Vagina (tissue), 2 donors: ENCODE measurements at regions of chr9 and their contacts with region 1.

Region 1: DNA sequence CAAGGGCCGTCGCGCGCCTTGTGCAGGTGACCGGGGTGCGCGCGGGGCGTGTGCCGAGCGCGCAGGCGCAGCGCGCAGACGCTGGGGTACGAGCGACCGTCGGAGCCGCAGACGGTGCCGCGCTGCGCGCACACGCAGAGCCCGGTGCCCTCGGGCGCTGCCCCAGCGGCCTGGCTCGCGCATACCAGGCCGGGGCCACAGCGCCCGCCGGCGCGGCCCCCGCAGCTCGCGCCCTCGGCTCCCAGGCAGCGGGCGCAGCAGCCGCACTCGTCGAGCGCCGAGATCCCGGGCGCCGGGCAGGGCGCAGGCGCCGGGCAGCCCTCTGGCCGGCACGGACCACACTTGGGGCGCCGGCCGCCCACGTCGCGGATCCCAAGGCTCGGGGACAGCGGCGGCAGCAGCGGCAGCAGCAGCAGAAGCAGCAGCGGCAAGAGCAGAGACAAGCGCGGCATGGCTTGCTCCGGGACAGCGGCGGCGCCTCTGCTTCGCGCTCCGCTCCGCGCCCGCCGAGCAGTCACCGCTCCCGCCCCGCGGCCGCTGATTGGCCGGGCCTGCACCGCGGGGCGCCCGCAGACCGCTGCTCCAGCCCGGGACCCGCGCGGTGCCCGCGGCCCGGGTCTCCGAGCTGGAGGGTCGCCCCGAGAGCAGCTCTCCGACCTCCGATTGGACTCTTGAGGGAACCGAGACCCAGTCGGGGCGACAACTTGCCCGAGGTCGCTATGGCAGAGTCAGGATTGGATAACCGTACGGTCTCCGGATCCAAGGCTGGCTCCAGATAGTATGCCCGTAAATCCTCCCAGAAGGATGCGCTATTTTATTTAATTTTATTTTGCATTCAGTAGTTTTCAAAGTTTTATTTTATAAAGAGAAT is at the start of gene IGFBPL1:
- DNase-seq: no peak
- H3K4me3 ChIP-seq: peak within 1 kb of the TSS; percentile 16 to 52
- H3K27ac ChIP-seq: no peak within 1 kb of the TSS
- H3K4me1 ChIP-seq: no peaks in the 10 kb centered on the region
- H3K27me3 ChIP-seq: no peaks in the 10 kb centered on the region
- CTCF ChIP-seq: no peak
- POLR2A ChIP-seq: no peak
- total RNA-seq, gene IGFBPL1: not detected

Region 2: GRCh38 chr9:37820142-37820541 is 604.1 kb before region 1 on chr9:
- intact Hi-C with region 1: no loop called
- DNase-seq: no peak
- H3K4me3 ChIP-seq: no peak overlapping the region
- H3K27ac ChIP-seq: no peak overlapping the region
- H3K4me1 ChIP-seq: no peaks in the 10 kb centered on the region
- H3K27me3 ChIP-seq: no peaks in the 10 kb centered on the region
- CTCF ChIP-seq: no peak
- POLR2A ChIP-seq: no peak

Region 3: GRCh38 chr9:38371495-38371894 is 52.7 kb before region 1 on chr9:
- intact Hi-C with region 1: loop called (anchors 10 kb)
- DNase-seq: no peak
- H3K4me3 ChIP-seq: no peak overlapping the region
- H3K27ac ChIP-seq: no peak overlapping the region
- H3K4me1 ChIP-seq: peaks cover 6% of the 10 kb centered on the region
- H3K27me3 ChIP-seq: no peaks in the 10 kb centered on the region
- CTCF ChIP-seq: peak in 1 of 3 experiments; percentile 7
- POLR2A ChIP-seq: no peak